ENCODE measurements at regions of chr6 and their contacts with region 1.

Region 1: DNA sequence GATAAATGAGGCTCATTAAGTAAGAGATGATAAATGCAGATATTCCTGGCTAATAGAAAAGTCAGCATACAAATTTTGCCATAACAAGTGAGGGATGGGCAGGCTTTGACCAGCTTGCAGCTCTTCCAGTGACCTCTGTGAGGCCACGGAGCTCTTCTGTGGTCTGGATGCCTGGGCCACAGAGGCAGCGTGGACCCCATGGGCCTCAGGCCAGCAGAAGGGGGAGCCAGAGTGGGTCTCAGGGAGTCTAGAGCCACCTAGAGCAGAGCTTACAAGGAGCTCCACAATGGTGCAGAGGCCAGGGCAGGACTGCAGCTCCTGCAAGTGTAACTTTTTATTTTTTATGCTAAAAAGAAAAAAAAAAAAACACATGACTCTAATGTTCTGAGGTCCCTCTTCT is 165.1 kb downstream of the ARID1B start:
- DNase-seq: no peak
- H3K4me3 ChIP-seq: no peak overlapping the region
- H3K27ac ChIP-seq: no peak overlapping the region
- H3K27me3 ChIP-seq: no peaks in the 10 kb centered on the region
- CTCF ChIP-seq: no peak

Region 2: DNA sequence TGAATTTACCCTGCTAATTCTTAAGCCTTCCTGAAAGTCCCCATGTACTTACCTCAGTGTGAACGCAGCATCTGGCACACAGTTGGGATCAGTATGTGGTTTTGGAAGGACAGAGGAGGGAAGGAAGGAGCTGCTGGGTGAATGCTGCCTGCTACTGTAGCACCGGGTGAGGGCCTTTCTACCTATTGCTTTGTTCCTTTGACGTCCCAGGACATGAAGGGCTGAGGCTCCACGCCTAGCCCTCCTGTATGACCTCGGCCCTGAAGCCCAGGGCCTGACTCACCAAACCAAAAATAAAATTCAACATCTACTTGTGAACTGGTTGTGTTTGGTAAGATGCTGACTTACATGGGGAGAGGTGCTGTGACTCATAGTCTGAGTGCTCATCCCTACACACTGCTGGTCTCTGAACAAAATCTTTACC is 114.0 kb before region 1 on chr6:
- CTCF ChIA-PET with region 1: interaction called, 10 read pairs
- POLR2A ChIA-PET with region 1: no interaction called
- DNase-seq: peak; percentile 55
- H3K4me3 ChIP-seq: no peak overlapping the region
- H3K27ac ChIP-seq: peak overlapping the region; percentile 87
- H3K27me3 ChIP-seq: no peaks in the 10 kb centered on the region
- CTCF ChIP-seq: no peak

Region 3: GRCh38 chr6:156953479-156954146 is 11.3 kb after region 1 on chr6:
- CTCF ChIA-PET with region 1: interaction called, 13 read pairs
- POLR2A ChIA-PET with region 1: no interaction called
- DNase-seq: peak; percentile 92
- H3K4me3 ChIP-seq: peak overlapping the region; percentile 21; the same call in 1 of the 2 replicates
- H3K27ac ChIP-seq: no peak overlapping the region
- H3K27me3 ChIP-seq: no peaks in the 10 kb centered on the region
- CTCF ChIP-seq: peak; percentile 48

Region 4: DNA sequence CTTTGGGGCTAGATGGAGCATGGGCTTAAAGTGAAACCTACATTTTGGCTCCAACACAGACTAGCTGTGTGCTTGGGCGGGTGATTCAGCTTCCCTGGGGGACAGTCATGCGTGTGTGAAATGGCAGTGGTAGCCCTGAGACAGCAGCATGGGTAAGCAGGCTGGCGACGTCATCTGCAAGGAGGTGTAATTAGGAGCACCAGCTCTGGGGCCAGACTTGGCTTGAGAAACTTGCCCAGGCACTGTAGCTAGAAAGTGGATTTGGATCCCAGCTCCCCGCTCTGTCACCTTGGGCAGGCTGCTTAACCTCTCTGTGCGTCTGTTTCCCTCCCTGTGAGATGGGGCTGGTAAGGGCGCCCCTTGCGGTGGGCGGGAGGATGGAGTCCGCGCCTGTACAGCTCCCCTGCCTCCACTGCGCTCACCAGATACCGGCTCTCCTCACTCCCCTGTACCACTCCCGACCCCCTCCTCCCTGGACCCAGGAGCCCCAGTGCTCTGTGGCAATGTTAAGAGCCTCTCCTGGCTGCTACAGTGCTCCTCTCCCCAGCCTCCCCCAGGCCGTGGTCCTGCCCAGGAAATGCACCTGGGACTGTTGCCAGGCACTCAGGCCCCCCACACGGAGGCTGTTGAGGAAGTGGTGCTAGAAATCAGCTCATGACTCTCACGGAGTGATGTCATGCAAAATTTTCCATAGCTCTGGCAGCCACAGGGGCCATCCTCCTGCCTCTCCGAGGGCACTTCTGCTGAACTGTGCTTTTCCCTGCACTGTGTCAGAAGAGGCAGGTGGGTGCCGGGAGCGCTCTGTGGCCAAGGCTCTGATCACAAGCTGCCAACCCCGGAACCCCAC is 1084.0 kb after region 1 on chr6:
- CTCF ChIA-PET with region 1: no interaction called
- POLR2A ChIA-PET with region 1: no interaction called
- DNase-seq: peak; percentile 92
- H3K4me3 ChIP-seq: peak overlapping the region; percentile 3
- H3K27ac ChIP-seq: peak overlapping the region; percentile 97
- H3K27me3 ChIP-seq: no peaks in the 10 kb centered on the region
- CTCF ChIP-seq: peak; percentile 68